AG04450 (cell line): ENCODE measurements at regions of chr11 and their contacts with region 1.

Region 1: GRCh38 chr11:57800444-57801182 is 39.0 kb downstream of the CTNND1 start:
- DNase-seq: peak; percentile 34
- H3K4me3 ChIP-seq: no peak overlapping the region
- H3K27ac ChIP-seq: no peak overlapping the region
- H3K27me3 ChIP-seq: no peaks in the 10 kb centered on the region
- CTCF ChIP-seq: peak; percentile 85

Region 2: GRCh38 chr11:57700425-57700824 is 100.2 kb before region 1 on chr11:
- CTCF ChIA-PET with region 1: interaction called, 13 read pairs
- POLR2A ChIA-PET with region 1: no interaction called
- DNase-seq: no peak
- H3K4me3 ChIP-seq: no peak overlapping the region
- H3K27ac ChIP-seq: no peak overlapping the region
- H3K27me3 ChIP-seq: no peaks in the 10 kb centered on the region
- CTCF ChIP-seq: no peak

Region 3: GRCh38 chr11:57751676-57752253 is 48.8 kb before region 1 on chr11 and contains the start of gene BTBD18:
- CTCF ChIA-PET with region 1: interaction called, 149 read pairs
- POLR2A ChIA-PET with region 1: interaction called, 6 read pairs
- DNase-seq: no peak
- H3K4me3 ChIP-seq: no peak within 1 kb of the TSS
- H3K27ac ChIP-seq: no peak within 1 kb of the TSS
- H3K27me3 ChIP-seq: no peaks in the 10 kb centered on the region
- CTCF ChIP-seq: peak; percentile 56
- polyA plus RNA-seq, gene BTBD18: not detected in 2 replicates

Region 4: DNA sequence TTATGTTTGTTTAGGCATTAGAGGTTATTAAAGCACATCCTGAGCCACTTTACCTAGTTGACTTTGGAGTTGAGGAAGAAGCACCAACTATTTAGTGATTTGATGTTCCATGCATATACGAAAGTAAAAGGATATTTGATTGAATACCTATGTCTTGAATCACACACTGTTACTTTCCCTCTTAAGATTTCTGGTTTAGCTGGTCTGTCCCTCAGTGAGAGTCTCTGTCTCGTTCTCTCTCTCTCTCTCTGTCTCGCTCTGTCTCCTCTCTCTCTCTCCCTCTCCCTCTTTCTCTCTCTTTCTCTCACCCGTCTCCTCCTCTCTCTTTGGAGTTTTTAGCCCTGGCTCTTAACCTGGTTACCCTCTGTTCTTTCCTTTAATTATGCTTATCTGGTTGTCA is 28.1 kb before region 1 on chr11:
- CTCF ChIA-PET with region 1: interaction called, 157 read pairs
- POLR2A ChIA-PET with region 1: interaction called, 3 read pairs
- DNase-seq: no peak
- H3K4me3 ChIP-seq: no peak overlapping the region
- H3K27ac ChIP-seq: no peak overlapping the region
- H3K27me3 ChIP-seq: no peaks in the 10 kb centered on the region
- CTCF ChIP-seq: no peak

Region 5: DNA sequence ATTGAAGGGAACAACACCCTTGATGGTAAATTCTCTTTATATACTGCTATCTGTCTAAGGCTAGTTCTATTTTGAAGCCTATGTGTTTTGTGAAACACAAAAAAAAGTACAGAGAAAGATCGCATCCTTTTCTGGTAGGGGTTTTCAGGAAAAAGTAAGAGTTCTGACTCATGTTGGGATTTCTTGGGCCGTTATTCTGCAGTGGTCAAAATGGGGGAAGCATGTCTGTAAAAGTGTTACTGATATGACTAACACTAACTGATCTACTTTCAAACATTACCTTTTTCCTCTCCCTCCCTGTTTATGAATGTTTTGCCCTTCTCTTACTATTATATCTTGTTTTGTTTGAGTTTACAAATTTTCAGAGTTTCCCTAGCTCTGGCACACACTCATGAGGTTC is 14.9 kb after region 1 on chr11:
- CTCF ChIA-PET with region 1: interaction called, 34 read pairs
- POLR2A ChIA-PET with region 1: no interaction called
- DNase-seq: no peak
- H3K4me3 ChIP-seq: no peak overlapping the region
- H3K27ac ChIP-seq: no peak overlapping the region
- H3K27me3 ChIP-seq: no peaks in the 10 kb centered on the region
- CTCF ChIP-seq: no peak

Region 6: DNA sequence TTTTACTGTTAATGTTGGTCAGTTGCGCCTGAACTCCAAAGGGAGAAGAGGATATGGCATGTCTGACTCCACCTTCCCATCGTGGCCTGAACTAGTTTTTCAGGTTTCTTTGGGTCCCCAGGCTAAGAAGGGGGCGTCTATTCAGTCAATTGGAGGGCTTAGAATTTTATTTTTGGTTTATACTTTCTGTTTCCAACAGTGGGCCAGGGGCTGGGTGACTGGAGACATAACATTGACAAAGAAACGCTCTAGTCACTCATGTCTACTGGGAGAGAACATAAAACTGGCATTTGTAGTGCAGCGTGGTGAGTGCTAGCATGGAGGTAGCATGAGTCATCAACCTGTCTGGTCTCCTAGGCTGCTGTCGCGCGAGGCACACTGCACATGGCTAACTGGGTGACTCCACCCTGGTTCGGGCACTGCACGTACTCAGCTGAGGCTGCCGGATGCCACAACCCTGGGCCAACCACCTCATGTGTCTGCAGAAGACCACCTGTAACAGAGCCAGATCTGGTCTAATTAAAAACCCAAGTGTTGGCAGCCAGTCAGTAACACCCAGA is 103.0 kb after region 1 on chr11:
- CTCF ChIA-PET with region 1: no interaction called
- POLR2A ChIA-PET with region 1: no interaction called
- DNase-seq: no peak
- H3K4me3 ChIP-seq: no peak overlapping the region
- H3K27ac ChIP-seq: no peak overlapping the region
- H3K27me3 ChIP-seq: peaks cover 3% of the 10 kb centered on the region
- CTCF ChIP-seq: no peak

Region 7: GRCh38 chr11:58286249-58286648 is 485.6 kb after region 1 on chr11:
- CTCF ChIA-PET with region 1: interaction called, 13 read pairs
- POLR2A ChIA-PET with region 1: no interaction called
- DNase-seq: peak; percentile 16
- H3K4me3 ChIP-seq: no peak overlapping the region
- H3K27ac ChIP-seq: no peak overlapping the region
- H3K27me3 ChIP-seq: no peaks in the 10 kb centered on the region
- CTCF ChIP-seq: peak; percentile 86

Region 8: DNA sequence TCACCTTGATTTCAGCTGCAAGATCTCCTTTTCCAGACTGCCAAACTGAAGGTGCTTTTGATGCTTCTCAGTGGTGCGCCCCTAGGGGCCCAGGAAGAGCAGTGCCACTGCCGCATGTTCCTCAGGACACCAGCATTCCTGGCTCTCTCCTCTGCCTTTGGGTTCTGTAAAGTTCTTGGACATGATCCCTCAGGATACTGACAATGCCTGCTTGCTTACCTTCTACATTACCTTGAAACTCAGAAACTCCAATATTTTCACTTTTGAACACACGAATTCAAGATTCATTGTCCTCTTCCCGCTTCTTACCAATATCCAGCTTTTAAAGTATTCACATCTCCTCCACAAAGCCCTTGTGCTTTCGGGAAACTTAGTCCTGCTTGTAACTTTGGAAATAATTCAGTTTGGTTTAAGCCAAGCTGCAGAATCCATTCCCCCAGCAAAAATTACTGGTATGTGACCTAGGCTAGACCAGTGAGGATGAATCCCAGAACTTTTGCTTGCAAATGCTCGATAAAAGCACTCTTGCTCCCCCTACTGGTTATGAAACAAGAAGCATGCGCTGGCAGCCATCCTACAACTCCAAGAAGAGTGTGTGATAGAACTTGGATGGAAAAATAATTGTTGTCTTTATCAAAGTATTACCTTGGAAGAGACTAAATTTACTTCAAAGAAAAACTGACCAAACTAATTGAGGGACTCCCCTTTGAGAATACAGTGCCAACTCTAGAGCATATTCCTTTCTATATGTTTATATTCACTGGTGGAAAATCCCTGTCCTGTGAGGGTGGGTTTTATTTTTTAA is 723.8 kb after region 1 on chr11:
- CTCF ChIA-PET with region 1: interaction called, 16 read pairs
- POLR2A ChIA-PET with region 1: no interaction called
- DNase-seq: peak; percentile 80
- H3K4me3 ChIP-seq: no peak overlapping the region
- H3K27ac ChIP-seq: no peak overlapping the region
- H3K27me3 ChIP-seq: no peaks in the 10 kb centered on the region
- CTCF ChIP-seq: peak; percentile 89